CD8-positive, alpha-beta T cell (primary cell): ENCODE measurements at regions of chr3 and their contacts with region 1.

Region 1: GRCh38 chr3:114498779-114499370 is 205.0 kb downstream of the TIGIT start:
- DNase-seq: no peak
- ATAC-seq: no peak
- H3K4me3 ChIP-seq: no peak overlapping the region
- H3K4me3 Mint-ChIP-seq: no peak overlapping the region
- H3K27ac ChIP-seq: no peak overlapping the region
- H3K27ac Mint-ChIP-seq: no peak overlapping the region
- H3K4me1 ChIP-seq: peaks cover 15% of the 10 kb centered on the region
- H3K4me1 Mint-ChIP-seq: peaks cover 32% of the 10 kb centered on the region
- H3K27me3 ChIP-seq: no peaks in the 10 kb centered on the region
- H3K27me3 Mint-ChIP-seq: no peaks in the 10 kb centered on the region
- CTCF ChIP-seq: no peak

Region 2: DNA sequence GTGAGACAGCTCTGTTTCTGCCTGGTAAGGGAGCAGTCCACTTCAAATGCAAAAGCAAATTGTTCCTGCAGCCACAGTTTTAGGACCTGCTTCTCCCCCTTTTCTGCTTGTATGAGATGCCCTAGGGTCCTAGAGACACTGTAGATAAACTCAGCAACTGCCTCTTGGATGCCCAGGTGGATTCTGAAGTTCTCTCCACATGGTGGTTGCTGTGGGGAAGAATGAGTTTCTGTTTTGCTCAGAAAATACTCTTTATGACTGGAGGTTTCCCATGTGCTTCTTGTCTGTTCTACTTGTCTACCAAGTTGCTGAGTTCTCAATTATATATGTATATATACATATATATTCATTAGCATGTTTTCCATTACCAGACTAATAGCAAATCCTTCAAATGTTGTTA is 255.9 kb before region 1 on chr3:
- CTCF ChIA-PET with region 1: no interaction called
- POLR2A ChIA-PET with region 1: no interaction called
- intact Hi-C with region 1: no loop called
- DNase-seq: no peak
- ATAC-seq: no peak
- H3K4me3 ChIP-seq: no peak overlapping the region
- H3K4me3 Mint-ChIP-seq: no peak overlapping the region
- H3K27ac ChIP-seq: no peak overlapping the region
- H3K27ac Mint-ChIP-seq: no peak overlapping the region
- H3K4me1 ChIP-seq: no peaks in the 10 kb centered on the region
- H3K4me1 Mint-ChIP-seq: no peaks in the 10 kb centered on the region
- H3K27me3 ChIP-seq: no peaks in the 10 kb centered on the region
- H3K27me3 Mint-ChIP-seq: no peaks in the 10 kb centered on the region
- CTCF ChIP-seq: no peak

Region 3: GRCh38 chr3:114272271-114272670 is 226.6 kb before region 1 on chr3:
- CTCF ChIA-PET with region 1: no interaction called
- POLR2A ChIA-PET with region 1: no interaction called
- intact Hi-C with region 1: no loop called
- DNase-seq: no peak
- ATAC-seq: no peak
- H3K4me3 ChIP-seq: no peak overlapping the region
- H3K4me3 Mint-ChIP-seq: no peak overlapping the region
- H3K27ac ChIP-seq: no peak overlapping the region
- H3K27ac Mint-ChIP-seq: no peak overlapping the region
- H3K4me1 ChIP-seq: no peaks in the 10 kb centered on the region
- H3K4me1 Mint-ChIP-seq: no peaks in the 10 kb centered on the region
- H3K27me3 ChIP-seq: no peaks in the 10 kb centered on the region
- H3K27me3 Mint-ChIP-seq: no peaks in the 10 kb centered on the region
- CTCF ChIP-seq: no peak

Region 4: GRCh38 chr3:114456742-114457141 is 42.1 kb before region 1 on chr3:
- CTCF ChIA-PET with region 1: no interaction called
- POLR2A ChIA-PET with region 1: interaction called, 3 read pairs
- intact Hi-C with region 1: loop called in 1 of 2 experiments (anchors 1 kb)
- DNase-seq: no peak
- ATAC-seq: no peak
- H3K4me3 ChIP-seq: no peak overlapping the region
- H3K4me3 Mint-ChIP-seq: no peak overlapping the region
- H3K27ac ChIP-seq: no peak overlapping the region
- H3K27ac Mint-ChIP-seq: no peak overlapping the region
- H3K4me1 ChIP-seq: peaks cover 11% of the 10 kb centered on the region
- H3K4me1 Mint-ChIP-seq: peaks cover 4% of the 10 kb centered on the region
- H3K27me3 ChIP-seq: peaks cover 0 to 6% of the 10 kb centered on the region in 2 experiments
- H3K27me3 Mint-ChIP-seq: no peaks in the 10 kb centered on the region
- CTCF ChIP-seq: no peak